ENCODE measurements at regions of chr7 and their contacts with region 1.

Region 1: DNA sequence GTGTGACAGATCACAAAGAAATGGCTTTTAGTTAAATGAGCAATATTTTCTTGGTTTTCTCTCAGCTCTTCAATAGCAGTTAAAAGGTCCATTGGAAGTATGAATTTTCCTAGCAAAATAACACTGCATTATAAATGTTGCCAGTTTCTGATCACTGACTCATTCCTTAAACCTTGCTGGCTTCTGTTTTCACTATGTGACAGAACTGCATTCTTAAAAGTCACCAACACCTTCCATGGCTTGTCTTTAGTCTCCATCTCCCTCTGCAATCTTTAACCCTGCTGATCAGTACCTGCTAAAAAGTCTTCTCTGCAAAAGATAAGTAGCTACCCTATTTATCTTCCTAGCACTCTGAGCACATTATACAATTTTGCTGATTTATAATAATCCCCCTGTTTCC is 405.0 kb upstream of the LRRN3 start:
- DNase-seq: no peak
- ATAC-seq: no peak
- H3K4me3 ChIP-seq: no peak overlapping the region
- H3K27ac ChIP-seq: no peak overlapping the region
- H3K4me1 ChIP-seq: no peaks in the 10 kb centered on the region
- H3K27me3 ChIP-seq: no peaks in the 10 kb centered on the region
- CTCF ChIP-seq: no peak
- POLR2A ChIP-seq: no peak
- RAD21 ChIP-seq: no peak

Region 2: DNA sequence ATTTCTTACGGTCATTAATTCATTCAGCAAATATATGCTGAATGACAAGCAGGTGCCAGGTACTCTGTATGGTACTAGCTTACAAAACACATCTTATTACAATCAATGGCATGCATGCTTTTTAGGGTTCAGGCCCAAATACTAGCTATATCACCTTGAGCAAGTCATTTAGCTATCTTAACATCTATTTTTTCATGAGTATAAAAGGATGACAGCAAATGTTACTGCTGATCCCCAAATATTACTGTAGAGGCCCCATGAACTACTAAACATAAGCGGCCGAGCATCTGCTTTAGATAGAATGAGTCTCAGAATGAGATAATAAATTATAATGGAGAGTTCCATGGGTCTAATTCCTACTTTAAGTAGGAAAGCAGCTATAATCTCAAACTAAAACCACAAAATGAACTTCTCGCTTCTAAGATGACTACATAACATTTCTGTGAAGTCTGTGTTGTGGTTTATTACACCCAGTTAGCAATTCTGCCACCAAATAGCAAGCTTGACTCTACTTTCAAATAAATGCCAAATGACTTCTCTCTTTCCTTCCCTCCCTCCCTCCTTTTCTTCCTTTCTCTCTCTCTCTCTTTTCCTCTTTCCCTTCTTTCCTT is 291.3 kb after region 1 on chr7:
- CTCF ChIA-PET with region 1: no interaction called
- POLR2A ChIA-PET with region 1: no interaction called
- RAD21 ChIA-PET with region 1: no interaction called
- intact Hi-C with region 1: loop called (anchors 10 kb)
- DNase-seq: no peak
- ATAC-seq: no peak
- H3K4me3 ChIP-seq: no peak overlapping the region
- H3K27ac ChIP-seq: no peak overlapping the region
- H3K4me1 ChIP-seq: no peaks in the 10 kb centered on the region
- H3K27me3 ChIP-seq: no peaks in the 10 kb centered on the region
- CTCF ChIP-seq: no peak
- POLR2A ChIP-seq: no peak
- RAD21 ChIP-seq: no peak